Caco-2 (cell line): ENCODE measurements at regions of chr2 and their contacts with region 1.

Region 1: DNA sequence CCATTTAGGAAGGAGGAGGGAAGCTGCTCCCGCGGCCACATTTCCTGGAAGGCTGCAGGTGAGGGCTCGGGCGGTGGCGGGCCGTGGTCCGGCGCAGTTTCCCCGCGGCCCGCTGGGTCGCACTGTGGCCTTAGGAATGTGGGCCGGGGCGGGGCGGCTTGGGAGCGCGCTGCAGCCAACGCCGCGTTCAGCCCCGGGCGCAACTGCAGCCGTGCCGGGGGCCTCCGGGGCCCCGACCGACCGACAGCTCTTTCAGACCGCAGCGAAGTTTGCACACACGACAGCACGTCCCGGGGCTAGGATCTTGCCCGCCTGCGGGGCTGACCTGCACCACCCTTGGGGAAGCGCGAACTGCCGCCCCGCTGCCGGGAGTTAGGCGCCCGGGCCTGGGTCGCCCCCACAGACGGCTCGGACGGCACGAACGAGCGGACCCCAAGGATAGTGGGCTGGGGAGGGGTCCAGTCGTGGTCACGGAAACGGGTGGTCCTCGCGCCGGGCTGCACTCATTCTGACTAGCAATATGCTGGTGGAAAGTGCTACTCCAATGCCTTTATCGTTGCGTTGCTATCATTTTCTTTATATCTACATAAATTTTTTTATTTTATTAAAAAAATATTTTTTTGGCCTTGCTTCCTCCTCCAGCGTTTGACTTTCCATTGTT is 69.9 kb upstream of the DLX2 start:
- DNase-seq: peak; percentile 72 to 89
- H3K4me3 ChIP-seq: peak overlapping the region; percentile 50
- H3K4me3 Mint-ChIP-seq: peak overlapping the region; percentile 67
- H3K27ac Mint-ChIP-seq: no peak overlapping the region
- H3K4me1 ChIP-seq: no peaks in the 10 kb centered on the region
- H3K4me1 Mint-ChIP-seq: no peaks in the 10 kb centered on the region
- H3K27me3 ChIP-seq: peaks cover 4% of the 10 kb centered on the region; the same call in 1 of the 2 replicates
- H3K27me3 Mint-ChIP-seq: peaks cover 8% of the 10 kb centered on the region
- CTCF ChIP-seq: peak; percentile 87 to 89

Region 2: DNA sequence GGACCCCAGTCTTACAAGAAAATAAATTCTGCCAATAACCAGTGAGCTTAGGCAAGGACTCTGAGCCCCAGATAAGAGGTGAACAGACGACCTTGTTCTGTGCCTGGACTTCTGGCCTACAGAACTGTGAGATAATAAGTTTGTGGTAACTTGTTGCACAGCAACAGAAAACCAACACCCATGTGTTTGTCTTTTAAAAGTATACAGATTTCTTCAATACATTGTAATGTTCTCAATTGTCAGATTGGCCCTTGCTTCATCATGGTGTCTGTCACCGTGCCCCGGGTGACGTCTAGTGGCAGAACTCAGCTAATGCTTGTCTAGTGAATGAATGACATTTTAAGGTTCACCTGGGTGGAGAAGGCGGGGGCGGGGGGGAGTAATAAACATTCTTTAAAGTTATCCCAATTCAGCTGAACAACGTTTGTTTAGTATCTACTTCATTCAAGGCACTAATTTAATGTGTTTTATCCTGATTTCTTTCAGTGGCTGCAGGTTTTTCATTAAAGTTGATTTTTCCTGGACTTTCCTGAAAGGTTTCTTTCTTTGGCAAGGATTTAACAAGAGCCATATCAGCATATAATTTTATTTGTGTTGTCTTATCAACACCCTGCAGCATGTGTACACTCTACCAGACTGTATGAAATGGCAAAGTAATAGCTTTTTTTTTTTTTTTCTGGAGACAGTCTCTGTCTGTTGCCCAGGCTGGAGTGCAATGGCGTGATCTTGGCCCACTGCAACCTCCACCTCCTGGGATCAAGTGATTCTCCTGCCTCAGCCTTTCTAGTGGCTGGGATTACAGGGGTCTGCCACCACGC is 53.8 kb after region 1 on chr2:
- CTCF ChIA-PET with region 1: interaction called, 3 read pairs
- POLR2A ChIA-PET with region 1: interaction called, 3 read pairs
- intact Hi-C with region 1: loop called (anchors 1 kb)
- DNase-seq: peak; percentile 51 to 59
- H3K4me3 ChIP-seq: no peak overlapping the region
- H3K4me3 Mint-ChIP-seq: no peak overlapping the region
- H3K27ac Mint-ChIP-seq: no peak overlapping the region
- H3K4me1 ChIP-seq: peaks cover 6% of the 10 kb centered on the region; the same call in 1 of the 2 replicates
- H3K4me1 Mint-ChIP-seq: no peaks in the 10 kb centered on the region
- H3K27me3 ChIP-seq: no peaks in the 10 kb centered on the region
- H3K27me3 Mint-ChIP-seq: no peaks in the 10 kb centered on the region
- CTCF ChIP-seq: peak; percentile 42 to 50

Region 3: DNA sequence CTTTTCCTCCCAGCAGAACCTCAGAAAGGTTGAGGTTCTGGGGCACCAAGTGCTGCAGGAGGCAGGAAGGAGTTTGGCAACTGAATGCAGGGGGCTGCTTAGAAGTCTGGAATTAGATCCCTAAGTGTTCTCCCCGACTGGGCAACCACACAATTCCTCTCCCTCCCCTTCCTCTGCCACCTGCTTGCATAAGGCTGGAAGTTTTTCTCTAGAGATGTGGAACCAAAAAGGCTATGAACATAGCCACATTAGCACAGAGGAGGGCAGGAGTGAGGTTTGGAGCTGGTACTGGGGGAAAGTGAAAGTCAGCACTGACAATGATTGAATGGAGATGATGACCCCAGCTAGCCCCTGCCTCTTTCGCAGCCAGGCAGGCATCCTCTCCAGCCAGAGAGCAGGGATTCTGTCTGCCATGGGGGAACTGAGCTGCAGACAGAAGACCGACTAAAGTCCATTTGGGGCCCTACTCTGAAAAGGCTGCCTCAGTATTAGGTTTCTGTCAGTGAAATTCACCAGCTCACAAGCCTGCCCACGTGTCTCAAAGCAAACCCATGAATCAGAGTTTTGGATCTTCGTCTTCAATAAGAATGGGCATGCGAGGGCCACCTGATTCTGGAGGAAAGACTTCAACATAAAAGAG is 166.8 kb after region 1 on chr2:
- CTCF ChIA-PET with region 1: interaction called, 12 read pairs
- POLR2A ChIA-PET with region 1: no interaction called
- intact Hi-C with region 1: no loop called
- DNase-seq: peak; percentile 47 to 74
- H3K4me3 ChIP-seq: no peak overlapping the region
- H3K4me3 Mint-ChIP-seq: peak overlapping the region; percentile 46
- H3K27ac Mint-ChIP-seq: peak overlapping the region; percentile 30
- H3K4me1 ChIP-seq: peaks cover 51% of the 10 kb centered on the region
- H3K4me1 Mint-ChIP-seq: peaks cover 32% of the 10 kb centered on the region
- H3K27me3 ChIP-seq: no peaks in the 10 kb centered on the region
- H3K27me3 Mint-ChIP-seq: no peaks in the 10 kb centered on the region
- CTCF ChIP-seq: no peak

Region 4: GRCh38 chr2:172427256-172427989 is 254.8 kb after region 1 on chr2 and contains the start of gene ITGA6:
- CTCF ChIA-PET with region 1: interaction called, 4 read pairs
- POLR2A ChIA-PET with region 1: no interaction called
- intact Hi-C with region 1: loop called (anchors 1 kb)
- DNase-seq: peak; percentile 90
- H3K4me3 ChIP-seq: peak within 1 kb of the TSS; percentile 90
- H3K4me3 Mint-ChIP-seq: peak within 1 kb of the TSS; percentile 70
- H3K27ac Mint-ChIP-seq: peak within 1 kb of the TSS; percentile 84
- H3K4me1 ChIP-seq: peaks cover 25% of the 10 kb centered on the region
- H3K4me1 Mint-ChIP-seq: no peaks in the 10 kb centered on the region
- H3K27me3 ChIP-seq: no peaks in the 10 kb centered on the region
- H3K27me3 Mint-ChIP-seq: no peaks in the 10 kb centered on the region
- CTCF ChIP-seq: peak in 1 of 2 experiments; percentile 17
- total RNA-seq, gene ITGA6: 27.8 and 33.0 TPM in 2 replicates

Region 5: DNA sequence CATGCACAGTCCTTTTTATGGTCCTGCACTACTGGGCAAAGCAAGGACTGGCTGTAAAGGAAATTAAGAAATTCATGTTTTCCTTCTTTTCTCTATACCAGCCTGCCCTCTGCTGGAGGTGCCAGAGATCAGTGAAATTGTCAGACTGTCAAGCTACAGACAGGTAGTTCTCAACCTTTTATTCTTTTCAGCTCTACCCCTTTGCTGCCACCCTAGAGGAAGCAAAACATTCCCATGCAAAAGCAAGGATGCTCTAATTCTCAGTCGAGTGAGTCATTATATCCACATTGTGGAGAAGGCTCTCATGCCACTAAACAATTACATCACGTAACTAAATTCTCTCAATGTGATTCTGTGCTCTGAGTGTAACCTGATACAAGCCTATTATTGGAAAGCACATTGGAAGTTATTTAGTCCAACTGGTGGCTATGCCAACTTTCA is 538.0 kb after region 1 on chr2:
- CTCF ChIA-PET with region 1: interaction called, 3 read pairs
- POLR2A ChIA-PET with region 1: no interaction called
- intact Hi-C with region 1: loop called (anchors 10 kb)
- DNase-seq: peak in 1 of 2 experiments; percentile 59
- H3K4me3 ChIP-seq: no peak overlapping the region
- H3K4me3 Mint-ChIP-seq: no peak overlapping the region
- H3K27ac Mint-ChIP-seq: no peak overlapping the region
- H3K4me1 ChIP-seq: no peaks in the 10 kb centered on the region
- H3K4me1 Mint-ChIP-seq: no peaks in the 10 kb centered on the region
- H3K27me3 ChIP-seq: no peaks in the 10 kb centered on the region
- H3K27me3 Mint-ChIP-seq: peaks cover 18% of the 10 kb centered on the region
- CTCF ChIP-seq: peak; percentile 64 to 73

Region 6: DNA sequence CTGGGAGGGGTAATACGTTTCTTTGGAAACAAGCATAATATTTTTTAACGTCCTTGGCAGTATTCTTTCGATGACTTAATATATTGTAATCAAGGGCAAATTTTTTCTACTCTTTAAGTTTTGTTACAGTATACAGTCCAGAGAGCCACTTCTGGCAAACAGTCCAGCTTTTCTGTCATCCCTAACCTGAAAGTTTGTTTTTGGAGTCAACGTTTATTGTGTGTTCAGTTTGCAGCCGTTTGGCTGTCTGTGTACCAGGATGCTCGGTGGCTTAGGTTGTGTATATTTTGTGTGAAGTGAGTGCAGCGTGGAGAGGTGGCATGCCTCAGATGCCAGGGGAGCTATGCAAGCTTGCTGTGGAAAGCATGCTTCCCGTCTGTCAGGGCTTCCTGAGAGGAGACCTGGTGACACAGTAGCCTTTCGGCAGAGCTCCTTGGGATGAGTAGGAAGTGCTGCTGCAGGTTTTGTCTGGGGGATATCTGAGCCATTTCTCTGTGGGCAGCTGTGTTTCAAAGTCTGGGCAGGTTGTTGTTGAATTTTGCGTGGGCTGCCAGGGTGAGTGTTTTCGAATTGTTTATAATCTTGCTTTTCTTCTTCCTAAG is 917.7 kb after region 1 on chr2:
- CTCF ChIA-PET with region 1: no interaction called
- POLR2A ChIA-PET with region 1: no interaction called
- intact Hi-C with region 1: no loop called
- DNase-seq: no peak
- H3K4me3 ChIP-seq: no peak overlapping the region
- H3K4me3 Mint-ChIP-seq: no peak overlapping the region
- H3K27ac Mint-ChIP-seq: no peak overlapping the region
- H3K4me1 ChIP-seq: peaks cover 14% of the 10 kb centered on the region
- H3K4me1 Mint-ChIP-seq: peaks cover 19% of the 10 kb centered on the region
- H3K27me3 ChIP-seq: no peaks in the 10 kb centered on the region
- H3K27me3 Mint-ChIP-seq: no peaks in the 10 kb centered on the region
- CTCF ChIP-seq: no peak